Dendritic cell treated with granulocyte-macrophage colony-stimulating factor and Interleukin-4, amounts not matched to agents 40 ng/mL and 50 ng/mL, for 4 days (primary cell): ENCODE measurements at regions of chr10 and their contacts with region 1.

Region 1: GRCh38 chr10:3811291-3811870 is 26.4 kb upstream of the KLF6 start:
- H3K4me3 Mint-ChIP-seq: peak overlapping the region; percentile 69
- H3K27ac Mint-ChIP-seq: peak overlapping the region; percentile 93
- H3K4me1 Mint-ChIP-seq: peaks cover 60% of the 10 kb centered on the region
- H3K27me3 Mint-ChIP-seq: no peaks in the 10 kb centered on the region

Region 2: DNA sequence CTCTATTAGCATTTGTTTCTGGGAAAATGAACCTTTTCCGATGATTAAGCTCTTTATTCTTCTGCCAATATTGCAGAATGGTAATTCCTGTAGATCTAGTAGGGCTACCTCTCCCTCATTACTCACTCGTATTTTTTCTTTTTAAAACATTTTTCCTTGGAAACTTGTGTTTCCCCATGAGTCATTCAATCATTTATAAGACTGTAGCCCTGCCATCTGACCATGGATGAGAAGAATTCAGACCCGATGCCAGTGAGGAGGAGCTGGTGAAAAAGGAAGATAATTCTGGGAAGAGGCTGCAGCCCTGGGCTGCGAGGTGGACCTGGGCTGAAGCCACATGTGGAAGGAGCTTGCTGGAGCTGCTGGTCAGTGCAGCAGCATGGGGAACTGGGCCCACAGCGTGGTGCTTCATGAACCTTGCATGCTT is 269.2 kb before region 1 on chr10:
- intact Hi-C with region 1: no loop called
- H3K4me3 Mint-ChIP-seq: no peak overlapping the region
- H3K27ac Mint-ChIP-seq: peak overlapping the region; percentile 65
- H3K4me1 Mint-ChIP-seq: peaks cover 22% of the 10 kb centered on the region
- H3K27me3 Mint-ChIP-seq: peaks cover 2% of the 10 kb centered on the region

Region 3: DNA sequence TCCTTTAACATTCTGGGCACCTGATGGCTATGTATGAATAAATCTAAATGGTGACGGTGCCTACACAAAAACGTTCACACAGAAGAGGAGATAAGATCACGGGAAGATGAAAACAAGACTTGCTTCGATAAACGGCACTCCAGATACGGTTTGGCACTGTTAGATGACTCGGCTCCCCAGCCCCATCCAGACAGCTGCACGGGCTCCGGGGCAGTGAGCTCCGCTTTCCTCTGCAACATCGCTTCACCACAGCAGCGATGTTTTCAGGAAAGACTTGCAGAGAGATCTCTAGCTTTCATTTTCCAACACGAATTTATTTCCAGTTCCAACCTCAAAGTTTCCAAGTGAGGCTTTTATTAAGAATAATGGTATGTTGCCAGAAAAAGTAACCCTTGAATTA is 158.5 kb before region 1 on chr10:
- intact Hi-C with region 1: no loop called
- H3K4me3 Mint-ChIP-seq: no peak overlapping the region
- H3K27ac Mint-ChIP-seq: no peak overlapping the region
- H3K4me1 Mint-ChIP-seq: peaks cover 22% of the 10 kb centered on the region
- H3K27me3 Mint-ChIP-seq: peaks cover 22% of the 10 kb centered on the region

Region 4: DNA sequence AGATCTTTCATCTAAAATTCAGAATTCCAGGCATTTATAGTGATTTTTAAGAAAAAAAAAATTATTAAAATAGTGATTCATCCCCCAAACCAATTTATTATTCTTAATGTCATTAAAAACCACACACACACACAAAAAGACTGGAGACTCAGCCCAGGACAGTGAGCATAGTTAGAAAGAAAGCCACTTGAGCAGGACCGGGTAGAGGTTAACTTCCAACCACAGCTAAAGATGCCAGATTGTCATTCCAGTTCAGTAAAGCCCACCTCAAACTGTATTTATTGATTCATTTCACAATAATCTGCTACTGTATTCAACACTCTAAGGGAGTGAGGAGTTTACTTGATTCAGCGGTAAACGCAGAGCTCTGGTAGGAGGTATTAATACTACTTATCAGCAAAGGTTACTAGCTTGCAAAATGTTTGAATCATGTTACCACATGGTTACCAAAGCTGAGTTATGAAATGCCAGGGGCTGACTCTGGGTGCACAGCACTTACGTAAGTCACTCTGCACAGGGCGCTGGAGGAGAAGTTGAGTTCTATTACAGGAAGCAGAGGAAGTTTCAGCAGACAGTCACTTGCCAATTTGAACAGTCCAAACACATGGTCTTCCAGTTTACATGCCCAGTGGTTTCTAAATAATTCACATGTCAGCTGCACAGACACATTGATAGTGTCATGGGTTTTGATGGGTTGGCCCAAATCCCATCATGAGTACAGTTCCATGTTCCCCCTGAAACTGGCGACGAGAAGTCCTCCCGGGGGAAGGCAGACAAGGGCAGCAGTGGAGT is 91.0 kb before region 1 on chr10:
- intact Hi-C with region 1: no loop called
- H3K4me3 Mint-ChIP-seq: peak overlapping the region; percentile 39
- H3K27ac Mint-ChIP-seq: peak overlapping the region; percentile 84
- H3K4me1 Mint-ChIP-seq: peaks cover 39% of the 10 kb centered on the region
- H3K27me3 Mint-ChIP-seq: no peaks in the 10 kb centered on the region

Region 5: DNA sequence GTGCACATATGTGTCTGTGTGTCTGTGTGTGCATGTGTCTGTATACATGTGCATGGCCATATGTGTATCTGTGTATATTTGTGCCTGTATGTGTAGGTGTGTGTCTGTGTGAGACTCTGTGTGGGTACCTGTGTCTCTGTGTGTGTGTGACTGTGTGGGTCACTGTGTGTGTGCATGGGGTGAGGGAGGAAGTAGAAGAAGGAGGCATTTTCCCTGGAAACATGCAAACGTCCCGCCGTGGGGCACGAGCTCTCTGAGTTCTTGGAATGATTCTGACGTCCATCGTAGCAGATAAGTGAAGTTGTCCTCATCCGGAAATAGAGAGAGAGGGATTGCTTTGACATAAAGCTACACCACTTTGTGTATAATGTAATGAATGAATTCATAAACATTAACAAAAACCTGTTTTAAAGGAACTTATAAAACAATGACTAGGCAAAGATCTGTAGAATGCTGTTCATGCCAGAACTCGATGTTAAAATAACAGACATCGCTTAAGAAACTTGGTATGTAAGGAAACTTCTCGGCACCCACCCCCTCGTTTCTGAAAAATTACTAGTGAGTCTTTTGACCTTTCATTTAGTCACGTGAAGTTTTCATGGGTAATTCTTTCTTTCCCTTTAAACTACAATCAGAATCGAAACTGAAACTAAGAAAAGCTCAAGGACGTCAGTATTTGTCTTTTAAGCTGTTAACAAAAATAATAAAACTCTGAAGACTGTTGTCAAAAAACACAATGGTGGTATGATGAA is 17.2 kb after region 1 on chr10:
- intact Hi-C with region 1: loop called (anchors 2 kb)
- H3K4me3 Mint-ChIP-seq: peak overlapping the region; percentile 39
- H3K27ac Mint-ChIP-seq: peak overlapping the region; percentile 84
- H3K4me1 Mint-ChIP-seq: peaks cover 49% of the 10 kb centered on the region
- H3K27me3 Mint-ChIP-seq: no peaks in the 10 kb centered on the region